ENCODE measurements at regions of chr3 and their contacts with region 1.

Region 1: DNA sequence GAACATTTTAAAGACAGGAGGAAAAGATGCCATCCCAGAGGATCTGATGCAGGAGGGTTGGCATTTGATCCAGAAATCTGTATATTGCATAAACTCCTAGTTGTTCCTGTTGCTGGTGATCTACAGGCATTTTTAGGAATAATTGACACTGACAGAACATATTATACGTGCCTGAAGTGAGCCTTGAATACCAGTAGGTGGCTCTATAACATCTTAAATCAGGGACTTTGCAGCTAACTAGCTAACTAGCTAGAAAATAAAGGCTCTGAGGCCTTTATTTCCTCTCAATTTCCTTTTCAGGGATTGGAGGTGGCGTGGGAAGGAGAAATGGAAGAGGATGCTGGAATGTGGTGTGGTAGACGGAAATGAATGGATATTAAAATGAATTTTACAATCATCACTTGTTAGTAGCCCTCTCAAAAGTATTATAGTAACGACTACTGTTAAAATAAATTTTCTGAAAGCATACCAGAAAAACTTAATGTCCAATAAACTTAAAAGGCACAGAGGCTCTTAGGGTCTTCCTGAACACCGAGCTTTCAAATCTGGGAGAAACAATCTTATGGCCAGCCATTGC is 73.9 kb upstream of the ZBED2 start:
- DNase-seq: peak in 4 of 5 donors; percentile 55 to 60 (median 58)
- H3K4me3 ChIP-seq: no peak overlapping the region
- H3K4me3 Mint-ChIP-seq: peak overlapping the region in 5 of 8 donors; percentile 26 to 74 (median 38)
- H3K27ac ChIP-seq: peak overlapping the region; percentile 18
- H3K27ac Mint-ChIP-seq: peak overlapping the region; percentile 24 to 93 (median 87)
- H3K4me1 ChIP-seq: peaks cover 68% of the 10 kb centered on the region
- H3K4me1 Mint-ChIP-seq: peaks cover 51 to 84% (median 67%) of the 10 kb centered on the region in 4 donors
- H3K27me3 ChIP-seq: no peaks in the 10 kb centered on the region
- H3K27me3 Mint-ChIP-seq: no peaks in the 10 kb centered on the region

Region 2: DNA sequence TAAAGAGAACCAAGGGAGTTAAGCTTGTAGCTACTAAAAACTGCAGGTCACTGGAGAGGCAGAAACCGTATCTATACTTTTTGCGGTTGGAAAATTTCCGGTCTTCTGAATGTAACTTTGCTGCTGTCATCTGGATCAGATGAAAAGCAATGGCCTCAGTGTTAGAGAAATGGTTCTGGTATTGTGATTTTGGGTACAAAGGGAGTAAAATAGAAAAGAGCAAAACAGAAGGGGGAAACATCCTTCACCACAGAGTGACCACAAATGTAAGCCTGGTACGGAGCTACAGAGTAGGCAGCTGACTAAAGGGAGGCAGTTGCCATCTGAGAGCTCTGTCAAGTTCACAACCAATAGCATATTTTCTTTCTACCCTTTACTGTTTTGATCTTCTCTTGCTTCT is 121.4 kb before region 1 on chr3:
- CTCF ChIA-PET with region 1: interaction called, 5 read pairs
- POLR2A ChIA-PET with region 1: interaction called, 10 read pairs
- intact Hi-C with region 1: no loop called
- DNase-seq: peak; percentile 70 to 78 (median 74)
- H3K4me3 ChIP-seq: peak overlapping the region; percentile 20 to 70
- H3K4me3 Mint-ChIP-seq: no peak overlapping the region
- H3K27ac ChIP-seq: peak overlapping the region; percentile 89
- H3K27ac Mint-ChIP-seq: no peak overlapping the region
- H3K4me1 ChIP-seq: peaks cover 90% of the 10 kb centered on the region
- H3K4me1 Mint-ChIP-seq: peaks cover 0 to 42% (median 36%) of the 10 kb centered on the region in 4 donors
- H3K27me3 ChIP-seq: no peaks in the 10 kb centered on the region
- H3K27me3 Mint-ChIP-seq: no peaks in the 10 kb centered on the region

Region 3: GRCh38 chr3:111610189-111610588 is 58.8 kb before region 1 on chr3:
- CTCF ChIA-PET with region 1: interaction called, 7 read pairs
- POLR2A ChIA-PET with region 1: interaction called, 8 read pairs
- intact Hi-C with region 1: loop called (anchors 1 kb)
- DNase-seq: peak; percentile 82 to 90 (median 85)
- H3K4me3 ChIP-seq: peak overlapping the region in 1 of 2 donors; percentile 20
- H3K4me3 Mint-ChIP-seq: peak overlapping the region; percentile 4 to 87 (median 78)
- H3K27ac ChIP-seq: peak overlapping the region; percentile 65
- H3K27ac Mint-ChIP-seq: peak overlapping the region; percentile 91 to 99 (median 95)
- H3K4me1 ChIP-seq: peaks cover 55% of the 10 kb centered on the region
- H3K4me1 Mint-ChIP-seq: peaks cover 56 to 82% (median 67%) of the 10 kb centered on the region in 4 donors
- H3K27me3 ChIP-seq: no peaks in the 10 kb centered on the region
- H3K27me3 Mint-ChIP-seq: no peaks in the 10 kb centered on the region

Region 4: GRCh38 chr3:111681661-111682426 is 12.8 kb after region 1 on chr3:
- CTCF ChIA-PET with region 1: interaction called, 10 read pairs
- POLR2A ChIA-PET with region 1: no interaction called
- intact Hi-C with region 1: no loop called
- DNase-seq: no peak
- H3K4me3 ChIP-seq: no peak overlapping the region
- H3K4me3 Mint-ChIP-seq: no peak overlapping the region
- H3K27ac ChIP-seq: no peak overlapping the region
- H3K27ac Mint-ChIP-seq: peak overlapping the region in 4 of 7 donors; percentile 1 to 45 (median 4)
- H3K4me1 ChIP-seq: peaks cover 14% of the 10 kb centered on the region
- H3K4me1 Mint-ChIP-seq: peaks cover 34 to 55% (median 41%) of the 10 kb centered on the region in 4 donors
- H3K27me3 ChIP-seq: no peaks in the 10 kb centered on the region
- H3K27me3 Mint-ChIP-seq: no peaks in the 10 kb centered on the region

Region 5: GRCh38 chr3:111859974-111860859 is 191.2 kb after region 1 on chr3:
- CTCF ChIA-PET with region 1: interaction called, 23 read pairs
- POLR2A ChIA-PET with region 1: no interaction called
- intact Hi-C with region 1: loop called (anchors 1 kb)
- DNase-seq: peak; percentile 62 to 78 (median 71)
- H3K4me3 ChIP-seq: peak overlapping the region; percentile 59 to 84
- H3K4me3 Mint-ChIP-seq: peak overlapping the region; percentile 91 to 98 (median 97)
- H3K27ac ChIP-seq: peak overlapping the region; percentile 63
- H3K27ac Mint-ChIP-seq: peak overlapping the region; percentile 89 to 97 (median 95)
- H3K4me1 ChIP-seq: peaks cover 11% of the 10 kb centered on the region
- H3K4me1 Mint-ChIP-seq: peaks cover 15 to 47% (median 26%) of the 10 kb centered on the region in 4 donors
- H3K27me3 ChIP-seq: no peaks in the 10 kb centered on the region
- H3K27me3 Mint-ChIP-seq: peaks cover 0 to 1% of the 10 kb centered on the region in 2 donors

Region 6: GRCh38 chr3:111947231-111947630 is 278.2 kb after region 1 on chr3:
- CTCF ChIA-PET with region 1: no interaction called
- POLR2A ChIA-PET with region 1: no interaction called
- intact Hi-C with region 1: no loop called
- DNase-seq: no peak
- H3K4me3 ChIP-seq: no peak overlapping the region
- H3K4me3 Mint-ChIP-seq: no peak overlapping the region
- H3K27ac ChIP-seq: no peak overlapping the region
- H3K27ac Mint-ChIP-seq: no peak overlapping the region
- H3K4me1 ChIP-seq: no peaks in the 10 kb centered on the region
- H3K4me1 Mint-ChIP-seq: no peaks in the 10 kb centered on the region
- H3K27me3 ChIP-seq: no peaks in the 10 kb centered on the region
- H3K27me3 Mint-ChIP-seq: peaks cover 0 to 1% of the 10 kb centered on the region in 2 donors

Region 7: DNA sequence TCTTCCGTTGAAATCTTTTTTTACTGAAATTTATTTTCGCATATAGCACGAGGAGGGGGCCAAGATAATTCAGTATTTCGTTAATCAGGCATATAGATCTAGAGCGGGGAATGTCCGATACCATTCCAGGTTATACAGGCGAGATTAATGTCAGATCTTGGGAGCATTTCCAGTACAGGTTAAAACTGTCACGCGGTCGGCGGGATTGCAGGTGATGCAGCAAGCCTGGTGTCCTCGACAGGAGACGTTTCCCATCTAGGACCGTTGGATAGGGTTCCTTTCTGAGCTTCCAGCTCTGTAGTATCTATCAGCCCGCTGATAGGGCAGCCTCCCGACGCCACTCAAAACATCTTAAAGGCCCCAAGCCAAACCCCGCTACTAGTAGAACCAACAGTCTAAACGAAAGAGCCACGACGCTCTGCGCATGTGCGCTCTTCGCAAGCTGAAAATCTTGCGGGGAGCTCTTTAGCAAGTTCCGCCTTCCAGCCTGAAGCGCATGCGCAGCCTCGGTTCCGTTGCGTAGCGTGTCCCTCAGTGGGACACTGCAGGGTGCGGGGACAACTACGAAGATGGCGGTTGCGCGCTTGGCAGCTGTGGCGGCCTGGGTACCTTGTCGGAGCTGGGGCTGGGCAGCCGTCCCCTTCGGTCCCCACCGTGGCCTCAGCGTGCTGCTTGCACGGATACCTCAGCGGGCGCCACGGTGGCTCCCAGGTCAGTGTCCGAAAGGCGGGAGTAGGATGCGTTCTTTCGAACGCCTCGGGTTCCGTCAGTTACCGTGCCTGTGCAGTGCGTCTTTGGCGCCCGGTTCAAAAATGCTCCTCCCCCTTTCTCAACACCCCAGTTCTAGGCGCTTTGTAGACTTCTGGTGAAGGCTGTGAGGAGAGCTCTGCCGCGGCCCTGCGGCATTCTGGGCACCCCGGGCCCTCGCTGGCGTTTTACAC is 309.8 kb after region 1 on chr3 and contains the start of gene ABHD10:
- CTCF ChIA-PET with region 1: interaction called, 15 read pairs
- POLR2A ChIA-PET with region 1: interaction called, 10 read pairs
- intact Hi-C with region 1: no loop called
- DNase-seq: peak; percentile 92 to 98 (median 96)
- H3K4me3 ChIP-seq: peak within 1 kb of the TSS; percentile 90 to 95
- H3K4me3 Mint-ChIP-seq: peak within 1 kb of the TSS; percentile 92 to 97 (median 92)
- H3K27ac ChIP-seq: peak within 1 kb of the TSS; percentile 80
- H3K27ac Mint-ChIP-seq: peak within 1 kb of the TSS; percentile 91 to 97 (median 95)
- H3K4me1 ChIP-seq: peaks cover 43% of the 10 kb centered on the region
- H3K4me1 Mint-ChIP-seq: peaks cover 26 to 48% (median 35%) of the 10 kb centered on the region in 4 donors
- H3K27me3 ChIP-seq: no peaks in the 10 kb centered on the region
- H3K27me3 Mint-ChIP-seq: no peaks in the 10 kb centered on the region
- total RNA-seq, gene ABHD10: 39.7 to 40.1 TPM